ENCODE measurements at regions of chr14 and their contacts with region 1.

Region 1: DNA sequence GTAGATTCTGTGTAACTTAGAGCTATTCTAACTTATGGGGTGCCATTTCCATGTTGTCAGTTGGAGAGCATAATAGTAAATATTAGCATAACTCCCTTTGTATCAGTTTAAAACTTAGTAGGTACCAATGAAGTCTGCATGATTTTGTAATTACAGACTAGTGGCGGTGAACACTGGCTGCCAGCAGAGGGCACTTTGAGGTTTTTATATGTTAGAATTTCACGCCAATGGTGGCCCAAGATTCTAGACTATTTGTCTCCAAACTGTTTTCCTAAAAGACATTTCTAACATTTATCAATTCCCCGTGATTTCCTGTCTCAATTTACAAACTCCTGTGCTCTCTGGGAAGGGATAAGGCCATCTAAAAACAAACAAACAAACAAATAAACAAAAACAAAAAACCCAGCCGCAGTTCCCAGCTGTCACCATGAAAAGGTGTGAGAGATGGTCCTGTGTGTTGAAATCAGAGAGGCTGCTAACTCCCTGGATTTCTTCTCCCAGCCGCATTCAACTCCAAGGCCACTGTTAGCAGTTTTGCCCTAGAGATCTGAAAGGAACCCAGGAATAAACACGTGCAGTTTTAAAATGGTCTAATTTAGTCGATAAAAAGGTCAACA is 57.6 kb downstream of the BRMS1L start:
- DNase-seq: peak in 7 of 10 donors; percentile 12 to 73 (median 49)
- H3K4me3 ChIP-seq: no peak overlapping the region
- H3K27ac ChIP-seq: peak overlapping the region in 11 of 59 donors; percentile 21 to 69 (median 39)
- H3K27me3 ChIP-seq: no peaks in the 10 kb centered on the region
- CTCF ChIP-seq: peak; percentile 54 to 93 (median 78)

Region 2: GRCh38 chr14:35963209-35963608 is 79.4 kb after region 1 on chr14:
- intact Hi-C with region 1: loop called in 1 of 2 experiments (anchors 5 kb)
- DNase-seq: no peak
- H3K4me3 ChIP-seq: no peak overlapping the region
- H3K27ac ChIP-seq: peak overlapping the region in 8 of 59 donors; percentile 19 to 97 (median 92)
- H3K27me3 ChIP-seq: no peaks in the 10 kb centered on the region
- CTCF ChIP-seq: peak in 26 of 56 donors; percentile 7 to 51 (median 25)

Region 3: DNA sequence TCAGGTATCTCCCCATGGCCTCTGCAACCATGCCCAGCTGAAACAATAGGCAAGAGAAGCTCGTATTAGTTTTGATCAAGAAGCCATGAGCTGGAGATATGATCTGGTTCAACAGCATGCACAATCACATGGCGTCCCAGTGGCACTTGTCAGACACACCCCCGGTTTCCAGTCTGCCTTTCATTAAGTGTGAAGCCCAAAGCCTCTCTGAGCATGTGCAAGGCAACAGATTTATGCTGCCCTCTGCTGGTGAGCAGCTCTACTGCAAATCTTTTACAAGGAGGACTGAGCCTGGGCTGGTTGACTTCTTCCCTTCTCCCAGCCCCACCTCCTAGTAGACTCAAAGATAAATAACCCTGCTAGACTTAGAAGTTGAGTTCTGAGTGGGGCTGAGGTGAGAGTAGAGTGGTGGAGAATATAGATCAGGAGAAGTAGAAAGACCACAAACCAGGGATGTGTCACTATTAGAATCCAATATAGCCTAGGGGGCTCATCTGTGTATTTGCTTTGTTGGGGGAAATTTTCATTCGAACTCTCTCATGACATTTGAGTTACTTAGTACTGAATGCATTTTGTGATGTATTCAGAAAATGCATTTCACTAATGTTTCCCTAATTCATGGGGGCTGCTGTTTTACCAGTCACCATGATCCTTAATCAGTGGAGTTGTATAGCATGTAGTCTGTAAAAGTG is 490.3 kb after region 1 on chr14:
- intact Hi-C with region 1: loop called in 1 of 2 experiments (anchors 5 kb)
- DNase-seq: peak; percentile 21 to 82 (median 60)
- H3K4me3 ChIP-seq: no peak overlapping the region
- H3K27ac ChIP-seq: no peak overlapping the region
- H3K27me3 ChIP-seq: peaks cover 0 to 7% (median 0%) of the 10 kb centered on the region in 45 donors
- CTCF ChIP-seq: peak; percentile 57 to 95 (median 85)

Region 4: GRCh38 chr14:36553656-36554260 is 670.0 kb after region 1 on chr14:
- intact Hi-C with region 1: loop called (anchors 5 to 10 kb)
- DNase-seq: no peak
- H3K4me3 ChIP-seq: no peak overlapping the region
- H3K27ac ChIP-seq: no peak overlapping the region
- H3K27me3 ChIP-seq: peaks cover 0 to 16% (median 0%) of the 10 kb centered on the region in 45 donors
- CTCF ChIP-seq: peak; percentile 13 to 80 (median 66)

Measured in dorsolateral prefrontal cortex (tissue), 120 donors.